ENCODE measurements at regions of chr1 and their contacts with region 1.

Region 1: GRCh38 chr1:200488375-200489165 is 78.7 kb upstream of the ZNF281 start:
- DNase-seq: peak; percentile 63 to 68
- H3K4me3 ChIP-seq: no peak overlapping the region
- H3K27ac ChIP-seq: no peak overlapping the region
- H3K4me1 ChIP-seq: peaks cover 24% of the 10 kb centered on the region
- H3K27me3 ChIP-seq: no peaks in the 10 kb centered on the region
- CTCF ChIP-seq: peak; percentile 89

Region 2: DNA sequence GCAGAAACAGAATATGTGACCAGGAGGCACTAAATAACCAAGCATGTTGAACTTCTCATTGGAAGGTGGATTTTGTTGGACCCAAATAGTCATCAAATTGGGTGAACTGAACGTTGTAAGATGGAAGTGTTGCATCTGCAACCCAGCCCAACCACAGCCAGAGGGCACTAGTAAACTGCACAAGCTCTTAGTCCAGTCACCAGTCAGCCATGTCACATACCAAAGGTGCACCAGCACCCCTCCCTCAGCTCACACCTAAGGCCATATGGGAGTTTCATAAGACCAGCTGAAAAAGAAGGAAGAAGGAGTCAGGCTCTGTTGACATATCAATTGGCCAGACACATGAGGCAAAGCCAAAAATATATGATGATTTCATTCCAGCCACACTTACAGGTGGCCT is 942.8 kb before region 1 on chr1:
- CTCF ChIA-PET with region 1: no interaction called
- POLR2A ChIA-PET with region 1: no interaction called
- intact Hi-C with region 1: loop called (anchors 1 kb)
- DNase-seq: peak; percentile 30 to 79
- H3K4me3 ChIP-seq: no peak overlapping the region
- H3K27ac ChIP-seq: no peak overlapping the region
- H3K4me1 ChIP-seq: no peaks in the 10 kb centered on the region
- H3K27me3 ChIP-seq: no peaks in the 10 kb centered on the region
- CTCF ChIP-seq: peak; percentile 61

Region 3: DNA sequence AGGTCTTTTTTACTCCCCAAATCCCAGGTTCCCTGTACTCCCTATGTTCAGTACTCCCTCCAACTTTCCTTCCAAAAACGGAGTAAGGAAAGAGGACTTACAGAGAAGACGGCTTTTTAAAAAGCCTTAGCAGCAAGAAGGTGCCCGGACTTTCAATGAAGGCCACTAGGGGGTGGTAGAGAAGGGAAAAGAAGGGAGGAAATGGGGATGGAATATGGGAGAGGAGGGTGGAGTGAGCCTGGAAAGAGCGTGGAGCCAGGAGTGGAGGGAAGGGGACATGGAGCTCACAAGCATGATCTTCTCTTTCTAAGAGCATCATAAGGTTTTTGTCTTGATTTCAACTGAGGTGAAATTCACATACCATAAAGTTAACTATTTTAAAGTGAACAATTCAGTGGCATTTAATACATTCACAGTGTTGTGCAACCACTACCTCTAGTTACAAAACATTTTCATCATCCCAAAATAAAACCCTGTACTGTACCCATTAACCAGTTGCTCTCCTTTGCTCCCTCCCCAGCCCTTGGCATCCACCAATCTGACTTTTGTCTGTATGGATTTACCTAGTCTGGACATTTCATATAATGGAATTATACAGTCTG is 208.7 kb before region 1 on chr1:
- CTCF ChIA-PET with region 1: interaction called, 6 read pairs
- POLR2A ChIA-PET with region 1: no interaction called
- intact Hi-C with region 1: loop called (anchors 1 kb)
- DNase-seq: peak in 1 of 2 experiments; percentile 23
- H3K4me3 ChIP-seq: no peak overlapping the region
- H3K27ac ChIP-seq: no peak overlapping the region
- H3K4me1 ChIP-seq: no peaks in the 10 kb centered on the region
- H3K27me3 ChIP-seq: no peaks in the 10 kb centered on the region
- CTCF ChIP-seq: peak; percentile 75

Region 4: DNA sequence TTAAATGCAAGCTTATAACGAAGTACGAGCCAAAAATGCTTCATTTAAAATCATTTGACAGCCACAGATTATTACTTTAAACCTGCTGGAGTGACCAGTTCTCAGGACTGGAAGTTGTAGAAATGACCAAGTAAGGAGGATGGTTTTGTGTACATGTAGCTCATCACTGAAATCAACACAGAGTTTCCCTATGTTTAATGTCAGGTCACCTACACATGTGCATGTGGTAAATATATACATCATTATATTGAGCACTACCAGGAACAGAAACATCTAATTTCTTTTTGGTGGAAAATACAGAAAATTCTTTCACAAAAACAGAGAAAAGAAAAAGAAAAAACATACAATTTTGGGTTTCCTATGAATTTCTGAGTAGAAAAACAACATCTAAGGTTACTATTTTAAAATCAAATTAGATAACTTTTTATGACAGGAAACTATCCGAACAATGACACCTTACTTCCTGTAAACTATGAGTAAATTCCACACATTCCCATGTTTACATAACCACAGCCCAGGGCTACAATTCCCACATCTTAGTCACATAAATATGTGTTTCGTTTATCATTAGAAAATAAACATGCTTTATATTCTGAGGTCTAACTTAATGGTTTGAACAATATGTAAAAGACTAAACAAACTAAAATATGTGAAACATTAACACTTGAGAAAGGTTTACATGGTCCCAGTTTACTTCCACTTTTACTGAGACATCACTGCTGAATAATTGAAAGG is 152.3 kb before region 1 on chr1:
- CTCF ChIA-PET with region 1: no interaction called
- POLR2A ChIA-PET with region 1: no interaction called
- intact Hi-C with region 1: loop called (anchors 1 kb)
- DNase-seq: peak; percentile 26 to 92
- H3K4me3 ChIP-seq: peak overlapping the region; percentile 8; the same call in 1 of the 2 replicates
- H3K27ac ChIP-seq: peak overlapping the region; percentile 92
- H3K4me1 ChIP-seq: peaks cover 43% of the 10 kb centered on the region
- H3K27me3 ChIP-seq: no peaks in the 10 kb centered on the region
- CTCF ChIP-seq: no peak

Region 5: DNA sequence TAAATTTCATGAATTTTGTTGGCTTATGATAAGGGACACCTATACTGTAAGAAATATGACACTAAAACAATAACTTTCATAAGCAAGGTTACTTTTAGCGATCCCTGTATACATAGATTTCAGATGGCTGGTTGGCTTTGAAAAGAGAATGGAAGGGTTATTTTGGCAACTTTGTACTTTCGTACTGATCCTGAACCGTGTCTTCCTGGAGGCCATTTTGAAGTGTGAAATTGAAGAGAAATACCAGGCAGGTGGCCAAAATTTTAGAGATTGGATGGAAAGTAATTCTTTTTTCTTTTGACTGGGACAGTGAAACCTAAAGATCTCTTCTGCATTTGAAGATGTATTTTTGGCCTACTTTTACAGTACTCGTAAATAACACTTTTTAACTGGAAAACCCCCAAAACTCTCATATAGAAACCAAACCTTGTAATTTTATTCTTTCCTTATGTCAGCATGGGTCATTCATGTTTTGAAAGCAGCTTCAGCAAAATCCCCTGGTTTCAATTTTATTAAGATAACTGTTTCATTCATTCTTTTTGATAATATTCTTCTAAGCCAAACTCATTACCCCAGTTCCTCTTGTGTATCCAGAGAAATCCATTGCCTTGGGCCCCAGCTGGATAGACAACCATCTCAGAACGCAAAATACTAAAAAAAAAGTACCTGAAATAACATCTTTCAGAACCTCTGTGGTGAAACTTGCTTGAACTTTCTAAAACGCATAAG is 40.4 kb before region 1 on chr1:
- CTCF ChIA-PET with region 1: interaction called, 24 read pairs
- POLR2A ChIA-PET with region 1: no interaction called
- intact Hi-C with region 1: no loop called
- DNase-seq: no peak
- H3K4me3 ChIP-seq: no peak overlapping the region
- H3K27ac ChIP-seq: no peak overlapping the region
- H3K4me1 ChIP-seq: 0 out of 2 replicates have a peak, but pooled peaks cover 1% of the 10 kb centered on the region
- H3K27me3 ChIP-seq: no peaks in the 10 kb centered on the region
- CTCF ChIP-seq: no peak

Measured in PC-9 (cell line).